ENCODE measurements at regions of chr7 and their contacts with region 1.

Region 1: GRCh38 chr7:73738612-73739374 is at the start of gene ABHD11:
- DNase-seq: peak; percentile 99
- ATAC-seq: peak; percentile 88
- H3K4me3 Mint-ChIP-seq: peak within 1 kb of the TSS; percentile 92
- H3K27ac Mint-ChIP-seq: peak within 1 kb of the TSS; percentile 87
- H3K4me1 Mint-ChIP-seq: peaks cover 12% of the 10 kb centered on the region
- H3K27me3 Mint-ChIP-seq: no peaks in the 10 kb centered on the region
- CTCF ChIP-seq: no peak
- total RNA-seq, gene ABHD11: 12.1 and 15.9 TPM in 2 replicates

Region 2: DNA sequence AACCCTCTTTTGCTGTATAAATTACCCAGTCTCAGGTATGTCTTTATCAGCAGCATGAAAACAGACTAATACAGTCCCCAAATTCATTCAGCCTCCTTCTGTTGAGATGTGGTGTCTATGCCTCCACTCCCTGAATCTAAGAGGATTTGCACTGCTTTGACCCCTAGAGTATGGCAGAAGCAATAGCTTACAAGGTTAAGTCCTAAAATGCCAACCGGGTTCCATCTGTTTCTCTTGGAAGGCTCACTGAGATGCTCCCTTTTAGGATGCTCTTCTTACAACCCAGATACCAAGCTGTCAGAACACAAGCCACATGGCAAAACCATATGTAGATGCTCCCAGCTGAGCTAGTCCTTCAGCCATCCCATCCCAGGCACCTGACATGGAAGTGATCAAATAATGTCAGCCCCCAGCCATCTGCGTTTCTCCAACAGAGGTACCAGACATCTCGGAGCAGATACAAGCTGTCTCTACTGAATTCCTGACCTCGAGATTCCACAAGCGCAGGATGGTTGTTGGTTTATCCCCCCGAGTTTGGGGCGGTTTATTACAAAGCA is 1346.9 kb before region 1 on chr7:
- CTCF ChIA-PET with region 1: no interaction called
- POLR2A ChIA-PET with region 1: no interaction called
- intact Hi-C with region 1: no loop called
- DNase-seq: no peak
- ATAC-seq: no peak
- H3K4me3 Mint-ChIP-seq: no peak overlapping the region
- H3K27ac Mint-ChIP-seq: no peak overlapping the region
- H3K4me1 Mint-ChIP-seq: no peaks in the 10 kb centered on the region
- H3K27me3 Mint-ChIP-seq: no peaks in the 10 kb centered on the region
- CTCF ChIP-seq: no peak

Region 3: GRCh38 chr7:73522105-73522872 is 216.5 kb before region 1 on chr7 and contains the start of gene BAZ1B:
- CTCF ChIA-PET with region 1: no interaction called
- POLR2A ChIA-PET with region 1: interaction called, 3 read pairs
- intact Hi-C with region 1: loop called (anchors 1 kb)
- DNase-seq: peak; percentile 90
- ATAC-seq: peak; percentile 92
- H3K4me3 Mint-ChIP-seq: peak within 1 kb of the TSS; percentile 95
- H3K27ac Mint-ChIP-seq: peak within 1 kb of the TSS; percentile 97
- H3K4me1 Mint-ChIP-seq: peaks cover 64% of the 10 kb centered on the region
- H3K27me3 Mint-ChIP-seq: no peaks in the 10 kb centered on the region
- CTCF ChIP-seq: no peak
- total RNA-seq, gene BAZ1B: 53.6 and 59.1 TPM in 2 replicates

Region 4: DNA sequence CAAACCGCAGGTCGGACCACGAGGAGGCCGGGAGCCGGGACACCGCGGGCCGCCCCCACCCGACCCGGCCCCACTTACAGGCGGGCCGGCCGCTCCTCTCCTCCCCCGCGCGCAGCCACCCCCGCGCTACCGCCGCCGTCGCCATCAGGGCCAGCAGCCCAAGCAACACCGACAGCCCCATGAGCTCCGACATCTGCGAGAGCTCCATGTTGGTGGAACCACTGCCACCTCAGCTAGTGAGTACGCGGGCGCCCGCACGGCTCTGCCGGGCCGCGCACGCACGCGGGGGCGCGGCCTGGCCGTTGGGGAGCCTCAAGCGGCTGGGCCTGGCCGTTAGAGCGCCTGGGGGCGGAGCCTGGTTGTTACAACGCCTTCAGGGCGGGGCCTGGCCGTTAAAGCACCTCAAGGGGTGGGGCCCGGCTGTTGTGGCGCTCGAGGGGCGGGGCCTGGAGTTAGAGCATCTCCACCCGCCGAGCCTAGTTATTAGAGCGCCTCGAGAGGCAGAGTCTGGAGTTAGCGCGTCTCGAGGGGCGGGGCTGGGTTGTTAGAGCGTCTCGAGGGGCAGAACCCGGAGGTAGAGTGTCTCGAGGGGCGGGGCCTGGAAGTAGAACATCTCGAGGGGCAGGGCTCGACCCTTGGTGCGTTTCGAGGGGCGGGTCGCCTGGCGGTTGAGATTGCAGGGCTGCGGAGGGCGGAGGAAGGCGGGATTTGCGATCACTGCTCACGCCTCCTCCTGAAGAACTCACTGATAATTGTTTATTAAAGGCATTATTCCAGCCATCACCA is 160.3 kb before region 1 on chr7 and contains the start of gene TBL2:
- CTCF ChIA-PET with region 1: no interaction called
- POLR2A ChIA-PET with region 1: interaction called, 10 read pairs
- intact Hi-C with region 1: loop called (anchors 1 kb)
- DNase-seq: peak; percentile 97
- ATAC-seq: peak; percentile 89
- H3K4me3 Mint-ChIP-seq: peak within 1 kb of the TSS; percentile 90
- H3K27ac Mint-ChIP-seq: peak within 1 kb of the TSS; percentile 92
- H3K4me1 Mint-ChIP-seq: peaks cover 22% of the 10 kb centered on the region
- H3K27me3 Mint-ChIP-seq: no peaks in the 10 kb centered on the region
- CTCF ChIP-seq: no peak
- total RNA-seq, gene TBL2: 26.1 and 33.5 TPM in 2 replicates

Region 5: GRCh38 chr7:73667344-73668102 is 71.3 kb before region 1 on chr7 and contains the start of gene VPS37D:
- CTCF ChIA-PET with region 1: interaction called, 3 read pairs
- POLR2A ChIA-PET with region 1: interaction called, 3 read pairs
- intact Hi-C with region 1: loop called (anchors 5 kb)
- DNase-seq: peak; percentile 97
- ATAC-seq: peak; percentile 91
- H3K4me3 Mint-ChIP-seq: peak within 1 kb of the TSS; percentile 78
- H3K27ac Mint-ChIP-seq: no peak within 1 kb of the TSS
- H3K4me1 Mint-ChIP-seq: peaks cover 6% of the 10 kb centered on the region
- H3K27me3 Mint-ChIP-seq: peaks cover 25% of the 10 kb centered on the region
- CTCF ChIP-seq: no peak
- total RNA-seq, gene VPS37D: 0.17 and 0.24 TPM in 2 replicates

Region 6: GRCh38 chr7:73718905-73719805 is 19.6 kb before region 1 on chr7 and contains the start of gene STX1A:
- CTCF ChIA-PET with region 1: no interaction called
- POLR2A ChIA-PET with region 1: interaction called, 6 read pairs
- intact Hi-C with region 1: loop called (anchors 1 kb)
- DNase-seq: peak; percentile 72
- ATAC-seq: peak; percentile 85
- H3K4me3 Mint-ChIP-seq: peak within 1 kb of the TSS; percentile 79
- H3K27ac Mint-ChIP-seq: no peak within 1 kb of the TSS
- H3K4me1 Mint-ChIP-seq: peaks cover 21% of the 10 kb centered on the region
- H3K27me3 Mint-ChIP-seq: peaks cover 28% of the 10 kb centered on the region
- CTCF ChIP-seq: no peak
- total RNA-seq, gene STX1A: 1.8 and 2.1 TPM in 2 replicates

Region 7: GRCh38 chr7:73851410-73852234 is 112.8 kb after region 1 on chr7:
- CTCF ChIA-PET with region 1: interaction called, 3 read pairs
- POLR2A ChIA-PET with region 1: no interaction called
- intact Hi-C with region 1: loop called (anchors 1 kb)
- DNase-seq: no peak
- ATAC-seq: peak; percentile 60
- H3K4me3 Mint-ChIP-seq: no peak overlapping the region
- H3K27ac Mint-ChIP-seq: peak overlapping the region; percentile 20
- H3K4me1 Mint-ChIP-seq: peaks cover 12% of the 10 kb centered on the region
- H3K27me3 Mint-ChIP-seq: peaks cover 19% of the 10 kb centered on the region
- CTCF ChIP-seq: no peak